CD4-positive, alpha-beta memory T cell (primary cell): ENCODE measurements at regions of chr2 and their contacts with region 1.

Region 1: DNA sequence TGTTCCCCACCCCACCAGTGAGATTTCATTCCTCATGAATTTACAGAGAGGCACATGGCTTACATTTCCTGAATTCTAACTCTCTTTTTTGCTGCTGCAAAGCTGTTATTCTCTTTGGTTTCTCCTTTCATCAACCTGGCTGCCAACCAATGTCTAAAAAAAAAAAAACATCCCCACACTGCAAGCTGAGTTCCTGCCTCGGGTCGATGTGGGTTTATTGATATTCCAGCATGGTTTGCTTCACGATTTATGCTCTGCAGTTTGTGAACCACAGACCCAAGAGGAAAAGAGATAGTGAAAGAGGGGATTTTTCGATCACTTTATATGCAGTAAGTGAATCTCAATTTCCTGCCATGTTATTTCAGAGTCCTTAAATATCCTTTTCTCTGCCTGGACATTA is 363.6 kb downstream of the LPIN1 start:
- DNase-seq: peak in 4 of 5 donors; percentile 33 to 60 (median 36)
- H3K4me3 ChIP-seq: no peak overlapping the region
- H3K4me3 Mint-ChIP-seq: peak overlapping the region in 7 of 8 donors; percentile 33 to 76 (median 63)
- H3K27ac ChIP-seq: no peak overlapping the region
- H3K27ac Mint-ChIP-seq: peak overlapping the region; percentile 14 to 91 (median 65)
- H3K4me1 ChIP-seq: peaks cover 25% of the 10 kb centered on the region
- H3K4me1 Mint-ChIP-seq: peaks cover 19 to 39% (median 23%) of the 10 kb centered on the region in 4 donors
- H3K27me3 ChIP-seq: no peaks in the 10 kb centered on the region
- H3K27me3 Mint-ChIP-seq: peaks cover 0 to 1% of the 10 kb centered on the region in 2 donors

Region 2: GRCh38 chr2:12127638-12128037 is 17.6 kb after region 1 on chr2:
- CTCF ChIA-PET with region 1: no interaction called
- POLR2A ChIA-PET with region 1: interaction called, 3 read pairs
- intact Hi-C with region 1: loop called (anchors 1 kb)
- DNase-seq: peak in 4 of 5 donors; percentile 32 to 43 (median 38)
- H3K4me3 ChIP-seq: peak overlapping the region; percentile 0 to 10
- H3K4me3 Mint-ChIP-seq: peak overlapping the region in 4 of 8 donors; percentile 62 to 88 (median 81)
- H3K27ac ChIP-seq: peak overlapping the region; percentile 50
- H3K27ac Mint-ChIP-seq: peak overlapping the region; percentile 68 to 92 (median 76)
- H3K4me1 ChIP-seq: peaks cover 45% of the 10 kb centered on the region
- H3K4me1 Mint-ChIP-seq: peaks cover 0 to 15% (median 10%) of the 10 kb centered on the region in 4 donors
- H3K27me3 ChIP-seq: no peaks in the 10 kb centered on the region
- H3K27me3 Mint-ChIP-seq: no peaks in the 10 kb centered on the region

Region 3: DNA sequence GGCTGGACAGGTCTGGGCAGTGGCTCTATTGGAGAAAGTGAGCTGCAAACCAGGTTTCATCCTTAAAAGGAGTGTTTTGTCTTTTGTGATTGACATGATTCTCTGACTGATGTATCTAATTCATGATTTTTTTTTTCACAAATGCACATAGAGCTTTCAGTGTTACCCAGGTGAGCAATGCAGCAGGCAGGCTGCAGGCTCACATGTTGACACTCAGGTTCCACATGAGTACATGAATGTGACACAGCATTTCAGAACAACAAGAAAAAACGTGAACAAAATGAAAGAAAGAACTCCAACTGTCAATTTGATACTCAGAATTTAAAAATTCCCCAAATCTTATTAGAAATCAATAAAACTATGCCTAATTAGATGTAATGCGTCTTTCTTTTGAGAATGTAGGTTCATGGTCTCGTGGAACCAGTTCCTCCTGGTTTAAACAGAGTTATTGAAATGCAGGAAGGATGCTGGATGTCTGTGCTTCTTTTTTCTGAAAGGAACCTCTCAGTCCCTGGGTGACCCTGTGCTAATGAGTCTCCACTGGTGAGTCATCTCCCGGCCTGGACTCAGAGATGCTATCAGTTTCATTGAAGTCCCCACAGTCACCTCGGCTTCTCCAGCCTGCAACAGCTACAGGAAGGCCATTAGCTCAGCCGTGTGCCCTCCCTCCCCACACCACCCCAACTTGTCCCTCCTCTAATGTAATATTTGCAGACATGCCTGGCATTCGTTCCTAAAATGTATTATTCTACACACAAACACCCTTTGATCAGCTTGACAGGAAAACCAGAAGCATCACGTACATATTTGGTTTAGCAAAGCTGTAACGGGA is 66.8 kb after region 1 on chr2:
- CTCF ChIA-PET with region 1: no interaction called
- POLR2A ChIA-PET with region 1: no interaction called
- intact Hi-C with region 1: no loop called
- DNase-seq: peak in 2 of 5 donors; percentile 7 to 21
- H3K4me3 ChIP-seq: peak overlapping the region in 1 of 2 donors; percentile 7
- H3K4me3 Mint-ChIP-seq: peak overlapping the region; percentile 16 to 79 (median 60)
- H3K27ac ChIP-seq: no peak overlapping the region
- H3K27ac Mint-ChIP-seq: peak overlapping the region in 6 of 7 donors; percentile 3 to 93 (median 76)
- H3K4me1 ChIP-seq: peaks cover 32% of the 10 kb centered on the region
- H3K4me1 Mint-ChIP-seq: peaks cover 24 to 47% (median 33%) of the 10 kb centered on the region in 4 donors
- H3K27me3 ChIP-seq: no peaks in the 10 kb centered on the region
- H3K27me3 Mint-ChIP-seq: no peaks in the 10 kb centered on the region